ENCODE measurements at regions of chr1 and their contacts with region 1.

Region 1: DNA sequence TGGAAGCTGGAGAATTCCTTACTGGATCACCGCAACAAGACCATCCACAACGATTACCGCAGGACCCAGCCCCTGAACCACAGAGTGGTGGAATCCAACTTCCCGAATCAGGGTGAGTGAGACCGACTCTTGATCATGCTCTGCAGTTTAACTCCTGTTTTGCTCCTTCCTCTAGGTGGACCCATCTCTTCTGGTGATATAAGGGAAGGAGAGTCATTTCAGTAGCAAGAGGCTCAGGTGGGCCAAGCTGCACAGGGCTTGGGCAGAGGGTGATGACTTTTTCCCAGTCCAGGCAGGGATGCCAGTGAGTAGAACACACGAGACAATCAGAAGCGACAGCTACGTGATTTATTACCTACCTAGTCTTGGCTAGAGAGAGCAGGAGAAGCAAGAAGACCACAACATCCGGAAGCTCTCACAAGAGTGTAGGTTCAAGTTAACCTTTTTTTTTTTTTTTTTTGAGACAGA is 25.2 kb downstream of the CA6 start:
- DNase-seq: no peak
- ATAC-seq: no peak
- H3K4me3 ChIP-seq: no peak overlapping the region
- H3K27ac ChIP-seq: no peak overlapping the region
- H3K4me1 ChIP-seq: no peaks in the 10 kb centered on the region
- H3K27me3 ChIP-seq: no peaks in the 10 kb centered on the region
- CTCF ChIP-seq: no peak

Region 2: GRCh38 chr1:8607906-8608305 is 363.0 kb before region 1 on chr1:
- CTCF ChIA-PET with region 1: no interaction called
- POLR2A ChIA-PET with region 1: no interaction called
- in situ Hi-C with region 1: no loop called
- intact Hi-C with region 1: no loop called
- DNase-seq: no peak
- ATAC-seq: no peak
- H3K4me3 ChIP-seq: no peak overlapping the region
- H3K27ac ChIP-seq: no peak overlapping the region
- H3K4me1 ChIP-seq: no peaks in the 10 kb centered on the region
- H3K27me3 ChIP-seq: no peaks in the 10 kb centered on the region
- CTCF ChIP-seq: no peak

Region 3: GRCh38 chr1:9605946-9606455 is 635.1 kb after region 1 on chr1:
- CTCF ChIA-PET with region 1: no interaction called
- POLR2A ChIA-PET with region 1: interaction called, 14 read pairs
- in situ Hi-C with region 1: no loop called
- intact Hi-C with region 1: no loop called
- DNase-seq: no peak
- ATAC-seq: no peak
- H3K4me3 ChIP-seq: no peak overlapping the region
- H3K27ac ChIP-seq: no peak overlapping the region
- H3K4me1 ChIP-seq: no peaks in the 10 kb centered on the region
- H3K27me3 ChIP-seq: no peaks in the 10 kb centered on the region
- CTCF ChIP-seq: no peak

Measured in Panc1 (cell line).